Upper lobe of right lung (tissue), 1 donor: ENCODE measurements at regions of chr12 and their contacts with region 1.

Region 1: DNA sequence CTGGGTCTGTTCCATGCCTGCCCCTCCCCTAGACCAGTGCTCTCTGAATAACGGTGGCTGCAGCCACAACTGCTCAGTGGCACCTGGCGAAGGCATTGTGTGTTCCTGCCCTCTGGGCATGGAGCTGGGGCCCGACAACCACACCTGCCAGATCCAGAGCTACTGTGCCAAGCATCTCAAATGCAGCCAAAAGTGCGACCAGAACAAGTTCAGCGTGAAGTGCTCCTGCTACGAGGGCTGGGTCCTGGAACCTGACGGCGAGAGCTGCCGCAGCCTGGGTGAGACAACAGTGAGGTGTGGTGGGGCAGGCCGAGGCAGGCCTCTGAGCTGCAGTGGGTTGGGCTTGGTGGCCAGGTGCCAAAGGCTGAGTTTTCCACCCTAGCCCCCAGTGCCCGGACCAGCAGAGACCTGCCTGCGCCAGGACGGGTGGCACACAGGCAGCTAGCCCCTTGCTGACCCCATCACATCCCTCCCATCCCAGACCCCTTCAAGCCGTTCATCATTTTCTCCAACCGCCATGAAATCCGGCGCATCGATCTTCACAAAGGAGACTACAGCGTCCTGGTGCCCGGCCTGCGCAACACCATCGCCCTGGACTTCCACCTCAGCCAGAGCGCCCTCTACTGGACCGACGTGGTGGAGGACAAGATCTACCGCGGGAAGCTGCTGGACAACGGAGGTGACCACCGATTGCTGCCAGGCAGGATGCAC is 28.2 kb upstream of the LRP1-AS start:
- DNase-seq: peak; percentile 87
- ATAC-seq: peak; percentile 67
- H3K4me3 ChIP-seq: no peak overlapping the region
- H3K27ac ChIP-seq: no peak overlapping the region
- H3K4me1 ChIP-seq: no peaks in the 10 kb centered on the region
- H3K27me3 ChIP-seq: no peaks in the 10 kb centered on the region
- CTCF ChIP-seq: peak; percentile 64

Region 2: DNA sequence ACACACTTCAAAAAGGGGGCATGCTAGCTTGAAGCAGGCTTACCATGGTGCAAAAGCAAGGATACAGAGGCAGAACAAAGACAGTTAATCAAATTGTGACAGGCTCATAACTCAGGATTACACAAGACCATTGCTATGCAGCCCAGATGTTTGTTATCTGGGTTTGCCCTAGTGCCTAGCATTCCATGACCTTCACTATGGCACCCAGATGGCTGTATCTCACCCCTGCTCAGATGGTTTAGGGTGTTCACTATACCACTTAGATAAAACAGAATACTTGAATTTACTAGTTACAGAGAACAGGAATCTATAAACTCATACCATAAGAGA is 297.6 kb before region 1 on chr12:
- intact Hi-C with region 1: no loop called
- DNase-seq: no peak
- ATAC-seq: peak; percentile 69
- H3K4me3 ChIP-seq: no peak overlapping the region
- H3K27ac ChIP-seq: no peak overlapping the region
- H3K4me1 ChIP-seq: peaks cover 12% of the 10 kb centered on the region
- H3K27me3 ChIP-seq: no peaks in the 10 kb centered on the region
- CTCF ChIP-seq: no peak

Region 3: DNA sequence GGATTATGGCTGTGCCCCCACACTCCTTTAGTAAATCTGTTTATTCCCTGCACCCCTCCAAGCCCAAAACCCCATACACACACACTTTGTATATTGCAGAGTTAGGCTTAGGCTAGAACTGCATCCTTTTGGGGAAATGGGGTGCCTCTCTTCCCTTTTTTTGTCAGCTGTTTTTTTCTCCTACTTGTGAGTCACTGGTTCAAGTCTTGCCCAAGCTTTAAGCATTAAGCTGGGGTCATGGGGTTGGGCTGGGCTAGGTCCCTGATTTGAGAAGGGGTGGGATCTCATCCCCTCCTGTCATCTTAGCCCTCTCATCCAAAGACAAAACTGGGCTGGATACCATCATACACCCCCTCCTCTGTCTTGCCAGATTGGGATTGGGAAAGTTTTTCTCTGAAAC is 45.7 kb before region 1 on chr12:
- intact Hi-C with region 1: loop called (anchors 5 kb)
- DNase-seq: no peak
- ATAC-seq: peak; percentile 18
- H3K4me3 ChIP-seq: peak overlapping the region; percentile 83
- H3K27ac ChIP-seq: peak overlapping the region; percentile 92
- H3K4me1 ChIP-seq: peaks cover 29% of the 10 kb centered on the region
- H3K27me3 ChIP-seq: no peaks in the 10 kb centered on the region
- CTCF ChIP-seq: no peak